ENCODE measurements at regions of chr1 and their contacts with region 1.

Region 1: DNA sequence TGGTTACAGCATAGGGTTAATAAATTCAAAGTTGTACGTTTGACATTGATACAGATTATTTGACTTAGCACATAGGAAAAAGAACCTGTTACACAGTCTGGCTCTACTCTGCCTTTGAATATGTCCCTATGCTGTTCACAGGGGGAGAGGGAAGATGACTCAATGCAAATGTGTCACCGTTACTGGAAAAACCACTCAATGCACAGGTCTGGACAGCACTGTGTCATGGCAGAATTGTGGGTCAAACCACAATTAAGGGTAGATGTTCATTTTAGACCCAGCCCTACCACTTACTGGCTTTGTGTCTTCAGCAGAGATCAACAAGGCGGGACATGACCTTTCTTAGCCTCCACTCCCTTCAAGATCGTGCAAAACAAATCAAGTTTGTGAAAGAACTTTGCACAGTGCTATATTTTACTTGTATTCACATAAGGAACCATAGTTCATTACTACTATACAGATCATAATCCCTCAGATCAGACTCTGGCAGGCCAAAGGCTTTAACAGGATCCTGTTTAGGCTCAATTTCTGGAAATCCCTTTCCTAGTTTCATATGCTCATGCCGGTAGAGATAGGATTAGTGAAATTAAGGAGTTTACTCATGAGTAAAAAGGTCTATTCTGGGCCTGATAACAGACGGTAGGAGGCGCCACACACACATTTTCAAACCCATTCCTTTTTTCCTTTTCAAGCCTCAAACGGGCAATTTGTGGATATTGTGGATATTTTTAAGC is 22.1 kb downstream of the EIF2D start:
- DNase-seq: peak; percentile 81
- ATAC-seq: peak; percentile 94
- H3K4me3 Mint-ChIP-seq: peak overlapping the region; percentile 59
- H3K27ac Mint-ChIP-seq: peak overlapping the region; percentile 98
- H3K4me1 Mint-ChIP-seq: peaks cover 65% of the 10 kb centered on the region
- H3K27me3 Mint-ChIP-seq: no peaks in the 10 kb centered on the region

Region 2: GRCh38 chr1:206469933-206470691 is 120.1 kb before region 1 on chr1 and contains the start of gene IKBKE:
- CTCF ChIA-PET with region 1: interaction called, 5 read pairs
- POLR2A ChIA-PET with region 1: no interaction called
- intact Hi-C with region 1: loop called in 1 of 2 experiments (anchors 2 kb)
- DNase-seq: peak; percentile 74
- ATAC-seq: peak; percentile 53
- H3K4me3 Mint-ChIP-seq: peak within 1 kb of the TSS; percentile 83
- H3K27ac Mint-ChIP-seq: peak within 1 kb of the TSS; percentile 91
- H3K4me1 Mint-ChIP-seq: peaks cover 92% of the 10 kb centered on the region
- H3K27me3 Mint-ChIP-seq: no peaks in the 10 kb centered on the region
- total RNA-seq, gene IKBKE: 15.3 to 17.2 TPM

Region 3: DNA sequence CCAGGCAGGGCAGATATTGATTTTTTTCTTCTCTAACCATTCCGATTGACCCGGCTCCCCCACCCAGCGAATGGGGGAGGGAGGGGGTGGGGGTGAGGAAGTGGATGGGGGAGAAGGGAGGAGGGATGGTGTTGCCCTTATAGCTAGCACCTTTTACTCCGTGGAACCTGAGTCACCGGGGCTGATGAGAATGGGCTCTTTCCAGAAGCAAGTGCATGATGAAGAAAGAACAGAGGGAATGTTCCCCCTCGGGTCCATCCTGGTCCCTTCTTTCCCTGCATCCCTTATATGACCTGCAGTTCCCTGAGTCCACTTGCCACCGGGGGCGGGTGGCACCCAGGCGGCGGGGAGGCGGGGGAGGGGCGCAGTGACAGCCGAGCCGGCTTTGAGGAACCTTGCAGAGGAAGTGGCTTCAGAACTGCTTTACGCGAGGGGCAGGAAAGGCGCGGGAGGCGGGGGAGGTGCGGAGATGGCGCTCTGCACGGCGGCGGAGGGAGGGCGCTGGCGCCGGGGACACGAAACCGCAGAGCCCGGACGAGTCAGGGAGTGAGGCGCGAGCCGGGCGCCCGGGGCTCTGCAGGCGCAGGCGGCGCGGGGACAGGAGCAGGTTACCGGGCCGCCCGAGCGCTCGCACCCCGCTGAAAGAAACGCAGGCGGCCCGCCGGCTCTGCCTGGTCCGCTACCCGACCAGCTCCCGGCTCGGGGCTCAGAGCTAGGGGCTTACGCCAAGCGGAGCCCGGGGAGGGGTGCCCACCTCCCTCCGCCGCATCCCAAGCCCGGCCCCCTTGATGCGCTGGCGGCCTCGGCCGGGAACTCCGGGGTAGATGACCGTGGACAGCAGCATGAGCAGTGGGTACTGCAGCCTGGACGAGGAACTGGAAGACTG is 33.2 kb before region 1 on chr1:
- CTCF ChIA-PET with region 1: interaction called, 621 read pairs
- POLR2A ChIA-PET with region 1: interaction called, 4 read pairs
- intact Hi-C with region 1: loop called (anchors 1 kb)
- DNase-seq: peak; percentile 95
- ATAC-seq: peak; percentile 43
- H3K4me3 Mint-ChIP-seq: peak overlapping the region; percentile 95
- H3K27ac Mint-ChIP-seq: peak overlapping the region; percentile 99
- H3K4me1 Mint-ChIP-seq: peaks cover 66% of the 10 kb centered on the region
- H3K27me3 Mint-ChIP-seq: no peaks in the 10 kb centered on the region

Region 4: GRCh38 chr1:206563367-206564207 is 26.6 kb before region 1 on chr1:
- CTCF ChIA-PET with region 1: interaction called, 621 read pairs
- POLR2A ChIA-PET with region 1: interaction called, 4 read pairs
- intact Hi-C with region 1: loop called (anchors 1 kb)
- DNase-seq: peak; percentile 22
- ATAC-seq: peak; percentile 4
- H3K4me3 Mint-ChIP-seq: peak overlapping the region; percentile 95
- H3K27ac Mint-ChIP-seq: peak overlapping the region; percentile 99
- H3K4me1 Mint-ChIP-seq: peaks cover 87% of the 10 kb centered on the region
- H3K27me3 Mint-ChIP-seq: no peaks in the 10 kb centered on the region

Region 5: GRCh38 chr1:206612129-206612876 is 22.1 kb after region 1 on chr1 and contains the start of gene EIF2D:
- CTCF ChIA-PET with region 1: interaction called, 52 read pairs
- POLR2A ChIA-PET with region 1: interaction called, 5 read pairs
- intact Hi-C with region 1: loop called (anchors 1 to 2 kb)
- DNase-seq: peak; percentile 98
- ATAC-seq: peak; percentile 87
- H3K4me3 Mint-ChIP-seq: peak within 1 kb of the TSS; percentile 92
- H3K27ac Mint-ChIP-seq: peak within 1 kb of the TSS; percentile 94
- H3K4me1 Mint-ChIP-seq: peaks cover 40% of the 10 kb centered on the region
- H3K27me3 Mint-ChIP-seq: no peaks in the 10 kb centered on the region
- total RNA-seq, gene EIF2D: 91.2 to 100 TPM

Region 6: GRCh38 chr1:206635080-206635977 is 45.1 kb after region 1 on chr1 and contains the start of gene DYRK3:
- CTCF ChIA-PET with region 1: interaction called, 3 read pairs
- POLR2A ChIA-PET with region 1: no interaction called
- intact Hi-C with region 1: loop called in 1 of 2 experiments (anchors 1 kb)
- DNase-seq: peak; percentile 97
- ATAC-seq: peak; percentile 93
- H3K4me3 Mint-ChIP-seq: peak within 1 kb of the TSS; percentile 76
- H3K27ac Mint-ChIP-seq: peak within 1 kb of the TSS; percentile 87
- H3K4me1 Mint-ChIP-seq: peaks cover 27% of the 10 kb centered on the region
- H3K27me3 Mint-ChIP-seq: peaks cover 7% of the 10 kb centered on the region
- total RNA-seq, gene DYRK3: 8.3 to 8.7 TPM

Region 7: DNA sequence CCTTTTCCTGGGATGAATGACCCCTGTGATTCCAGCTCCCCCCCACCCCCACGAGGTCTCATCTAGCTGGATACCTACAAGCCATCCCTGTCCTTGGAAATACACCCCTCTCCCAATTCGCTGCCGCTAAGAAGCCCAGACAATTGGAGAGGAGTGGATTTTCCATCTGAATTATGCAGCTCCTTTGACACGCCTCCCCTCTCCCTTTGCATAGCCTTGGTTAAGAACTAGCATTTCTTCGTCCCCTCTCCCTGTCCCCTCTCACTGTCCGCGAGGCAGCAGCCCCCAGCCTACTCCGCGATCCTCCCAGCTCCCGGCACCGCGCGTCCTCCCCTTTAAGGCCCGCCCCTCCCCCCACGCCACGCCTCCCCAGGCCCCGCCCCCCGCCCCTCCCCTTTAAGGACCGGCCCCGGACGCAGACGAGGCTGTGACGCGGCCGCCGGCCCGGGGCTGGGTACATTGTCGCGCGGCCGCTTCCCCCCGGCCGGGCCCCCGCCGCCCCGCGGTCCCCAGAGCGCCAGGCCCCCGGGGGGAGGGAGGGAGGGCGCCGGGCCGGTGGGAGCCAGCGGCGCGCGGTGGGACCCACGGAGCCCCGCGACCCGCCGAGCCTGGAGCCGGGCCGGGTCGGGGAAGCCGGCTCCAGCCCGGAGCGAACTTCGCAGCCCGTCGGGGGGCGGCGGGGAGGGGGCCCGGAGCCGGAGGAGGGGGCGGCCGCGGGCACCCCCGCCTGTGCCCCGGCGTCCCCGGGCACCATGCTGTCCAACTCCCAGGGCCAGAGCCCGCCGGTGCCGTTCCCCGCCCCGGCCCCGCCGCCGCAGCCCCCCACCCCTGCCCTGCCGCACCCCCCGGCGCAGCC is 94.5 kb after region 1 on chr1 and contains the start of gene MAPKAPK2:
- CTCF ChIA-PET with region 1: no interaction called
- POLR2A ChIA-PET with region 1: no interaction called
- intact Hi-C with region 1: loop called in 1 of 2 experiments (anchors 2 kb)
- DNase-seq: peak; percentile 88
- ATAC-seq: peak; percentile 70
- H3K4me3 Mint-ChIP-seq: peak within 1 kb of the TSS; percentile 98
- H3K27ac Mint-ChIP-seq: peak within 1 kb of the TSS; percentile 94
- H3K4me1 Mint-ChIP-seq: peaks cover 66% of the 10 kb centered on the region
- H3K27me3 Mint-ChIP-seq: peaks cover 2% of the 10 kb centered on the region
- total RNA-seq, gene MAPKAPK2: 62.8 to 64.7 TPM